B cell (primary cell): ENCODE measurements at regions of chr9 and their contacts with region 1.

Region 1: DNA sequence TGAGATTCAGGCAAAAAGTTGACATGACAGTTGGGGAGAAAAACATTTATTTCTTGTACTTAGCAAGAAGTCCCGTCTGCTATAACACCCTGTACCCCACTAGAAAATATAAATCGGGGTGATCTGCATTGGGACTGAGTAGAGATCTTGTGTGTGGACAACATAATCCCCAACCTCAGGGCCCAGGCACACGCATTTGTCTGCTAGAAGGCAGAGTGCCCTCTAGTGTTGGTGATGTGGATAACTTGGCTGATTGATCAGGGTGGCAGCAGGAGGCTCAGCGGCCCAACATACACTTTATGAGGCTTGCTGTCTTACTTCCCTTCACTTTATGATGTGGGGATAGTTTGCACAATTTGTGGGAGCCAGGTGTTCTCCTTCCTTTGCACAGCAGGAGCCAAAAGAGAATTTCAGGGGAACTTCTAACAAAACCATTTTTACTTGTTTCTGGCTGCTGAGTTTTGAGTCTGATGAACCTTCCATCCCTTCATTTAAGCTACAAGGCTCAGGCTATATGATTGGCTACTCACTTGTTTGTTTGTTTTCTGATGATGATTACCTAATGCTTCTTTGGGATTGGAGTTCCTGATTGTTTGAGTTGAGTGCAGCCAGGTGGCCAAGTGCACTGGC is 263.2 kb downstream of the DMAC1 start:
- DNase-seq: peak; percentile 16
- ATAC-seq: no peak
- H3K4me3 ChIP-seq: no peak overlapping the region
- H3K4me3 Mint-ChIP-seq: no peak overlapping the region
- H3K27ac ChIP-seq: no peak overlapping the region
- H3K27ac Mint-ChIP-seq: no peak overlapping the region
- H3K4me1 ChIP-seq: no peaks in the 10 kb centered on the region
- H3K4me1 Mint-ChIP-seq: no peaks in the 10 kb centered on the region
- H3K27me3 ChIP-seq: peaks cover 0 to 3% (median 0%) of the 10 kb centered on the region in 4 experiments
- H3K27me3 Mint-ChIP-seq: peaks cover 16% of the 10 kb centered on the region
- CTCF ChIP-seq: peak; percentile 35

Region 2: GRCh38 chr9:7053903-7054302 is 482.5 kb before region 1 on chr9:
- CTCF ChIA-PET with region 1: no interaction called
- POLR2A ChIA-PET with region 1: no interaction called
- intact Hi-C with region 1: loop called (anchors 5 kb)
- DNase-seq: no peak
- ATAC-seq: no peak
- H3K4me3 ChIP-seq: no peak overlapping the region
- H3K4me3 Mint-ChIP-seq: no peak overlapping the region
- H3K27ac ChIP-seq: no peak overlapping the region
- H3K27ac Mint-ChIP-seq: no peak overlapping the region
- H3K4me1 ChIP-seq: no peaks in the 10 kb centered on the region
- H3K4me1 Mint-ChIP-seq: peaks cover 3% of the 10 kb centered on the region
- H3K27me3 ChIP-seq: no peaks in the 10 kb centered on the region
- H3K27me3 Mint-ChIP-seq: no peaks in the 10 kb centered on the region
- CTCF ChIP-seq: no peak

Region 3: DNA sequence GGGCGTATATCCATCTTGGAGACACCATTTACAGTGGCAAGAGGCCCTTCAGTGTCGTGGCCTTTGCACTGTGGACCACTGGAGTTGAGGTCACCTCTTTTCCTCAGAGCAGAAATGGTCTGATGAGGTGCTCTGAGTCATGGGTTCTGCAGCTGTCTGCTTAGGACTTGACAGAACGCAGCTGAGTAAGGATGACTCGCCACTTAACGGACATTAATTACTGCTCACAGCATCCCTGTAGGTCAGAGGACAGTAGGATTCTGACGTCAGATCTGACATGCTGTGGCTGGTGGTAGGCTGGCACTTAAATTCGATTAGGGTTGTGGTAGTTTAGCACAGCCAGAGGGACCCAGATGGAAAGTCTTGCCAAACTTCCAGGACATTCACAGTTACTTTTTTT is 216.3 kb before region 1 on chr9:
- CTCF ChIA-PET with region 1: no interaction called
- POLR2A ChIA-PET with region 1: no interaction called
- intact Hi-C with region 1: no loop called
- DNase-seq: no peak
- ATAC-seq: no peak
- H3K4me3 ChIP-seq: no peak overlapping the region
- H3K4me3 Mint-ChIP-seq: no peak overlapping the region
- H3K27ac ChIP-seq: no peak overlapping the region
- H3K27ac Mint-ChIP-seq: no peak overlapping the region
- H3K4me1 ChIP-seq: no peaks in the 10 kb centered on the region
- H3K4me1 Mint-ChIP-seq: no peaks in the 10 kb centered on the region
- H3K27me3 ChIP-seq: peaks cover 0 to 3% (median 0%) of the 10 kb centered on the region in 4 experiments
- H3K27me3 Mint-ChIP-seq: no peaks in the 10 kb centered on the region
- CTCF ChIP-seq: no peak